ENCODE measurements at regions of chr16 and their contacts with region 1.

Region 1: DNA sequence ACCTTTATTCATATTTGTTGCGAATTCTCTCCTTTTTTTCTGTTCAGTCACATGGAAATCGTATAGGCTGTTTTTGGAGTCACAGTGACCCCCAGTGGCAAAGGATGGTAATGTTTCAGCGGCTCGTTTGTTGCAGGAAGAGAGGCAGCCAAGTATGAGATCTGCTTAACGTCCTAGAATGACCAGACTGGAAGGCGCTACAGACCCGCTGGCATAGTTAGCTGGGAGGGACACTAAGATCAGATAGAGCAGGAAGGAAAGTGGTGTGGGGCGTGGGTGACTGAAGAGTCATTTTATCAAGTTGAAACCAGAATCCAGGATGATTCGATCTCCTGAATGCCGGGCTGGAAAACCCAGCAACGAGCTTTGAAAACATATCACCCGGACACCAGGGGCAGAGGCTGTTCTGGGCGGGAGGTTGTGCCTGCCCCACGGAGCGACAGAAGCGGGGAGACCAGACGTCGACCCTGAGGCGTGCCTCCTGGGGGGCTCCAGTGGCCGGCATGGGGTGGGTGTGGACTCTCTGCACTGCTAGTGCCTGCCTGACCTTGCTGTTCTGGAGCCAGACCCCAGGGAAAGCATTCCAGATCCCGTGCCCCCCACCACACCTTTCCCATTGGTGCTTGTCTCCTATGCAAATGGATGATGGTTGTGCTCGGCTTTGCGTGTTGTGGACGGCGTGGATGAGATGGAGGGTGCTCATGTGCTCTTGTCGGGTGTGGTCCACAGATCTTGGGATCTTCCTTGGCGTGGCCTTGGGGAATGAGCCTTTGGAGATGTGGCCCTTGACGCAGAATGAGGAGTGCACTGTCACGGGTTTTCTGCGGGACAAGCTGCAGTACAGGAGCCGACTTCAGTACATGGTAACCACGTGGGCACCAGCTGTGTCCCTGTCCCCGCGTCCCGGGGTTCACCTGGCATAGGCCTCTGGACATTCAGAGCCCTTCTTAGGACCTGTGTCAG is 7.7 kb downstream of the IL34 start:
- DNase-seq: peak; percentile 78
- H3K4me3 ChIP-seq: peak overlapping the region in 2 of 8 donors; percentile 3 to 40
- H3K27ac ChIP-seq: peak overlapping the region in 5 of 8 donors; percentile 55 to 85 (median 68)
- H3K4me1 ChIP-seq: peaks cover 0 to 47% (median 19%) of the 10 kb centered on the region in 6 donors
- H3K27me3 ChIP-seq: no peaks in the 10 kb centered on the region
- CTCF ChIP-seq: peak; percentile 79 to 96 (median 91)
- POLR2A ChIP-seq: no peak

Region 2: DNA sequence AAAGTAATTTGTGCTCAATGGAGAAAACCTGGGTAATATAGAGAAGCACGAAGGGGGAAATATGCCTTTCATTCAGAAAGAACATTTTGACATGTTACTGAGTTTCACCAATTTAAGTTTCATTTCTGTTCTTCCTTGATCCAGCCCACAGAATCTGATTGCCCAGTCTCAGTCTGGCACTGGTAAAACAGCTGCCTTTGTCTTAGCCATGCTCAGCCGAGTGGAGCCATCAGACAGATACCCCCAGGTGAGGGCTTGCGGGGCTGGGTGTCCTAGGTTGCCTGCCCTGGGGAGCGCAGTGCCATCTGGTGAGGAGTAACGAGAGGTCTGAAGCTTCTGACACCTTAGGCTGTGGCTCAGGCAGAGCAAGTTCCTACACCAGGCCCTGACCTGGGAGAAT is 289.7 kb before region 1 on chr16:
- intact Hi-C with region 1: loop called (anchors 5 kb)
- DNase-seq: no peak
- H3K4me3 ChIP-seq: no peak overlapping the region
- H3K27ac ChIP-seq: no peak overlapping the region
- H3K4me1 ChIP-seq: no peaks in the 10 kb centered on the region
- H3K27me3 ChIP-seq: no peaks in the 10 kb centered on the region
- CTCF ChIP-seq: no peak
- POLR2A ChIP-seq: no peak

Region 3: GRCh38 chr16:70520612-70521297 is 133.3 kb before region 1 on chr16:
- intact Hi-C with region 1: no loop called
- DNase-seq: no peak
- H3K4me3 ChIP-seq: no peak overlapping the region
- H3K27ac ChIP-seq: peak overlapping the region in 4 of 8 donors; percentile 4 to 46 (median 24)
- H3K4me1 ChIP-seq: peaks cover 19 to 55% (median 36%) of the 10 kb centered on the region in 6 donors
- H3K27me3 ChIP-seq: no peaks in the 10 kb centered on the region
- CTCF ChIP-seq: no peak
- POLR2A ChIP-seq: no peak

Region 4: GRCh38 chr16:70534971-70535370 is 119.1 kb before region 1 on chr16:
- intact Hi-C with region 1: loop called (anchors 10 kb)
- DNase-seq: no peak
- H3K4me3 ChIP-seq: no peak overlapping the region
- H3K27ac ChIP-seq: no peak overlapping the region
- H3K4me1 ChIP-seq: peaks cover 0 to 37% (median 3%) of the 10 kb centered on the region in 6 donors
- H3K27me3 ChIP-seq: no peaks in the 10 kb centered on the region
- CTCF ChIP-seq: no peak
- POLR2A ChIP-seq: no peak

Region 5: GRCh38 chr16:70582290-70582978 is 71.7 kb before region 1 on chr16:
- intact Hi-C with region 1: loop called (anchors 10 kb)
- DNase-seq: no peak
- H3K4me3 ChIP-seq: peak overlapping the region in 6 of 8 donors; percentile 13 to 65 (median 38)
- H3K27ac ChIP-seq: peak overlapping the region in 6 of 8 donors; percentile 15 to 76 (median 51)
- H3K4me1 ChIP-seq: peaks cover 0 to 65% (median 14%) of the 10 kb centered on the region in 6 donors
- H3K27me3 ChIP-seq: no peaks in the 10 kb centered on the region
- CTCF ChIP-seq: peak in 4 of 11 experiments; percentile 16 to 36 (median 32)
- POLR2A ChIP-seq: no peak

Measured in spleen (tissue), 13 donors.